Colonic mucosa (tissue), 4 donors: ENCODE measurements at regions of chr20 and their contacts with region 1.

Region 1: GRCh38 chr20:37990571-37991151 is 42.6 kb downstream of the TTI1 start:
- DNase-seq: peak; percentile 33
- H3K4me3 ChIP-seq: no peak overlapping the region
- H3K27ac ChIP-seq: no peak overlapping the region
- H3K4me1 ChIP-seq: peaks cover 13% of the 10 kb centered on the region
- H3K27me3 ChIP-seq: no peaks in the 10 kb centered on the region
- CTCF ChIP-seq: no peak

Region 2: GRCh38 chr20:37564388-37565133 is 426.1 kb before region 1 on chr20:
- intact Hi-C with region 1: loop called (anchors 5 kb)
- DNase-seq: peak; percentile 34
- H3K4me3 ChIP-seq: no peak overlapping the region
- H3K27ac ChIP-seq: no peak overlapping the region
- H3K4me1 ChIP-seq: no peaks in the 10 kb centered on the region
- H3K27me3 ChIP-seq: peaks cover 10% of the 10 kb centered on the region
- CTCF ChIP-seq: peak; percentile 86

Region 3: GRCh38 chr20:37651932-37652331 is 338.7 kb before region 1 on chr20:
- intact Hi-C with region 1: loop called (anchors 10 kb)
- DNase-seq: no peak
- H3K4me3 ChIP-seq: no peak overlapping the region
- H3K27ac ChIP-seq: no peak overlapping the region
- H3K4me1 ChIP-seq: no peaks in the 10 kb centered on the region
- H3K27me3 ChIP-seq: no peaks in the 10 kb centered on the region
- CTCF ChIP-seq: no peak

Region 4: GRCh38 chr20:38084400-38084951 is 93.8 kb after region 1 on chr20:
- intact Hi-C with region 1: no loop called
- DNase-seq: no peak
- H3K4me3 ChIP-seq: no peak overlapping the region
- H3K27ac ChIP-seq: peak overlapping the region; percentile 37
- H3K4me1 ChIP-seq: no peaks in the 10 kb centered on the region
- H3K27me3 ChIP-seq: no peaks in the 10 kb centered on the region
- CTCF ChIP-seq: no peak